A549 (cell line): ENCODE measurements at regions of chr1 and their contacts with region 1.

Region 1: DNA sequence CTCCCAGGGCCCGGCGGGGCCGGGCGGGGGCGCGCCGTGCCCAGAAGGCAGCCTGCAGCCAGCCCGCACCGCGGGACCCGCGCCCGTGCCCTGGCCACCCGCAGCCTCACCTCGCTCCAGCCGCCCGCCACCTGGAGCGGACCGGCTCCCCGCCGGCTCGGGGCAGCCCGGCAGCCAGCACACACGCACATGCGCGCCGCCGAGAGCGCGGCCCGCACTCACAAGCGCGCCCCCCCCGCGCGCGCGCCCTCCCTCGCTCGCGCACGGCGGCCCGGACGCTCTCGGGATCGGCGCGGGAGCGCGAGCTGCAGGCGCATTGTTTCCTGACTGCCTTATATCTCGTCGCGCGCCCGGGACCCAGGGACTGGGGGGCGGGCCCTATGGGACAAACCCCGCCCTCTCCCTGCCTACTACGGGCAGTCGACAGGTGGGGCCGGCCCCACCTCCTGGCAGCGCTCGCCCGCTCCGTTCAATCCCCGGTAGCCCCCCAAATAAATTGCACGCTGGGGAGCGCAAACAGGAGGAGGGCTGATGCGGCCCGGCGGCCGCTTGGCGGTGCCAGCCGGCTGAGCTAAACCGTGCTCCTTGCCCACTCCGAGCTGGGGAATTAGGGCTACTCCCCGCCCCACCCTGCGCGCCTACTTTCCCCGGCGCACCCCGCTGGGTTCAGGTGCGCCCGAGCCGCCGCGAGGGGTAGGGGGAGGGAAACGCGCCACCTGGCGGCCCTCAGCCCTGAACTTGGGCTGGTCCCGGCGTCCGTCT is at the start of gene MYCL:
- DNase-seq: peak; percentile 72 to 80
- ATAC-seq: peak; percentile 80 to 83
- H3K4me3 ChIP-seq: peak within 1 kb of the TSS; percentile 60
- H3K27ac ChIP-seq: peak within 1 kb of the TSS; percentile 71 to 83
- H3K4me1 ChIP-seq: peaks cover 10% of the 10 kb centered on the region; the same call in 2 of the 3 replicates
- CTCF ChIP-seq: peak; percentile 58
- EP300 ChIP-seq: no peak
- POLR2A ChIP-seq: peak; percentile 54
- RAD21 ChIP-seq: peak; percentile 40 to 68
- polyA plus RNA-seq, gene MYCL: 1.3 and 1.5 TPM in 2 replicates

Region 2: GRCh38 chr1:39816415-39817090 is 85.3 kb before region 1 on chr1:
- CTCF ChIA-PET with region 1: interaction called, 29 read pairs
- POLR2A ChIA-PET with region 1: no interaction called
- DNase-seq: peak; percentile 44 to 68
- ATAC-seq: peak; percentile 88 to 90
- H3K4me3 ChIP-seq: no peak overlapping the region
- H3K27ac ChIP-seq: no peak overlapping the region
- H3K4me1 ChIP-seq: 0 out of 3 replicates have a peak, but pooled peaks cover 9% of the 10 kb centered on the region
- CTCF ChIP-seq: peak; percentile 64
- EP300 ChIP-seq: no peak
- POLR2A ChIP-seq: no peak
- RAD21 ChIP-seq: peak; percentile 64 to 71

Region 3: GRCh38 chr1:39845275-39846116 is 56.4 kb before region 1 on chr1:
- CTCF ChIA-PET with region 1: interaction called, 16 read pairs
- POLR2A ChIA-PET with region 1: no interaction called
- DNase-seq: no peak
- ATAC-seq: no peak
- H3K4me3 ChIP-seq: no peak overlapping the region
- H3K27ac ChIP-seq: no peak overlapping the region
- H3K4me1 ChIP-seq: no peaks in the 10 kb centered on the region
- CTCF ChIP-seq: no peak
- EP300 ChIP-seq: no peak
- POLR2A ChIP-seq: no peak
- RAD21 ChIP-seq: no peak

Region 4: DNA sequence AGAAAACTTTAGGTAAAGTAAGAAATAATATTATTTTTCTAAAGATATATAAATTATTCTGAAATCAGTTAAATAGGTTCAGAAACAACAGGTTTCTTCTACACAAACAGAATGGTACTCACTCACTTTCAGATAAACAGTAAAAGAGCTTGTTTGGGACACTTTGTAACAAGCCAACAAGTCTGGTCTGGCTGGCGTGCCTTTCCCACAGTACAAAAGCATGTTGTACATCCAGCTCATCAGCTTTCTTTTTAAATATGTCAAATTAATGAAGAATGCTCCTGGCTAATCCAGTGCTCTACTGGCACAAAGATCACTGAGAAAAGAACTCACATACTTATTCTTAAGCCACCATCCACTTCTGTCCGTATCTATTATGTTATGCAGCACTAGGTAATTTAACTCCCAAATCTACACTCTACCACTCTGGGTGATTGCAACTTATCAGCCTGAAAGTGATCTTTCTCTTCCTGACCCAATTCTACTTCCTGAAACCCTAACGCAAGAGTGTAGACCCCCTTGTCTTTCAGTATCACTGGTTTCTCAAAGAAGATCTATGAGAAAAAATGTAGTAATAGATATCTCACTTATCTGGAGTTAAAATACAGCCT is 51.2 kb before region 1 on chr1:
- CTCF ChIA-PET with region 1: interaction called, 16 read pairs
- POLR2A ChIA-PET with region 1: no interaction called
- DNase-seq: no peak
- ATAC-seq: no peak
- H3K4me3 ChIP-seq: no peak overlapping the region
- H3K27ac ChIP-seq: no peak overlapping the region
- H3K4me1 ChIP-seq: peaks cover 17% of the 10 kb centered on the region
- CTCF ChIP-seq: no peak
- EP300 ChIP-seq: no peak
- POLR2A ChIP-seq: no peak
- RAD21 ChIP-seq: no peak

Region 5: GRCh38 chr1:39885516-39885915 is 16.4 kb before region 1 on chr1:
- CTCF ChIA-PET with region 1: interaction called, 12 read pairs
- POLR2A ChIA-PET with region 1: interaction called, 3 read pairs
- DNase-seq: no peak
- ATAC-seq: no peak
- H3K4me3 ChIP-seq: no peak overlapping the region
- H3K27ac ChIP-seq: no peak overlapping the region
- H3K4me1 ChIP-seq: peaks cover 14% of the 10 kb centered on the region
- CTCF ChIP-seq: no peak
- EP300 ChIP-seq: no peak
- POLR2A ChIP-seq: no peak
- RAD21 ChIP-seq: no peak

Region 6: DNA sequence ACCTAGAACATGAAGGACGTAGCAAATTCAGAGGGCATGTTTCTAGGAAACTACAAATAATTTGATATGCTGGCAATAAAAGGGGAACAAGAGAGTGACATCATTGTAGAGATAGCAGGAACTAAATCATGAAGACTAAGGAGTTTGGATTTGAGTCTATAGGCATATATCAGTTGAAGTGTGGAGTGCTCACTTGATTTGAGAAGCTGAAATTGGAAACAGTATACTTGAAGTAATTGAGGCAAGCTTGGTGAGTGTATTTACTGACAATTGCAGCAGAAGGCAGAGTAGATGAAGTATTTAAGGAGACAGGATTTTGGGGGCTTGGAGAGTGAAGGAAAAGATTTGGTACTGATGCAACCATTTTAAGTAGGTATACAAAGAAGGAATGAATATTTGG is 339.5 kb after region 1 on chr1:
- CTCF ChIA-PET with region 1: no interaction called
- POLR2A ChIA-PET with region 1: no interaction called
- DNase-seq: no peak
- ATAC-seq: no peak
- H3K4me3 ChIP-seq: no peak overlapping the region
- H3K27ac ChIP-seq: no peak overlapping the region
- H3K4me1 ChIP-seq: no peaks in the 10 kb centered on the region
- CTCF ChIP-seq: no peak
- EP300 ChIP-seq: no peak
- POLR2A ChIP-seq: no peak
- RAD21 ChIP-seq: no peak